ENCODE measurements at regions of chr2 and their contacts with region 1.

Region 1: GRCh38 chr2:97935719-97936161 is 60.0 kb downstream of the TMEM131 start:
- DNase-seq: peak; percentile 44
- H3K4me3 ChIP-seq: peak overlapping the region; percentile 48
- H3K27ac ChIP-seq: peak overlapping the region; percentile 93
- H3K4me1 ChIP-seq: peaks cover 73% of the 10 kb centered on the region
- CTCF ChIP-seq: no peak

Region 2: GRCh38 chr2:97890093-97890492 is 45.6 kb before region 1 on chr2:
- CTCF ChIA-PET with region 1: no interaction called
- POLR2A ChIA-PET with region 1: no interaction called
- intact Hi-C with region 1: no loop called
- DNase-seq: no peak
- H3K4me3 ChIP-seq: no peak overlapping the region
- H3K27ac ChIP-seq: no peak overlapping the region
- H3K4me1 ChIP-seq: no peaks in the 10 kb centered on the region
- CTCF ChIP-seq: no peak

Region 3: DNA sequence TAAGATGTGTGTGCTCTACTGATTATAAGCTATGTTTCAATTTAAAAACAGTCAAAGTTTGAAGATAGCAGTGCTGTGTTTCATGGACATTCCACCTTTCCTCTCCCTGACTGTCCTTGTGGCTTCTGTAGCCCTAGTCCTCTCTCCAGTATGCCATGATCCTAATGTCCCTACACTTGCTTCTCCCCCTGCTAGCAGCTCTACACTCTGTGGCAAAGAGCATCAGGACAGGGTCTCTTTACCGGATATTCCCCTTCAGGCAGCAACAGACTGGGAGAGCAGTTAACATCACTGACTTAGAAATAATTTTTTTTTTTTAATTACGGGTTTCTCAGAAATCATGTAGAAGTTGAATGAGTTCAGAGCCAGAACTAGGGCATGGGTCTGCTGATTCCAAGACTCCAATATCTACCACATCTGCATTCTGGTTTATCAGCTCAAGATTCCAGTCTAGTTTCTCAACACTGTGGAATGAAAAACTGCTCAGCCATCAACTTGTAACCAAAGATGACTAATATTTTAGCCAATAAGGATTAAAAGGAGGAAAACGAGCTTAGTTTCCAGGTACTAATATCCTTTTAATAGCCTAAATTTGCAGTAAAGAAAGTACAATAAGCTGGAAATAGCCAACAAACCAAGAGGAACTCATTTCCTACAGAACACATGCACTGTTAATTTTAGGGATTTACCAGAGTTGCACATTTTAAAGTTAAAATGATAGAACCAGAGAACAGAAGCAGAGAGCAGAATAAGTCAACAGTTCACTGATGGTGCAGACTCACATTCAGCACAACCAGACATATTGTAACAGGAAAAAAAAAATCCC is 14.8 kb after region 1 on chr2:
- CTCF ChIA-PET with region 1: interaction called, 4 read pairs
- POLR2A ChIA-PET with region 1: interaction called, 12 read pairs
- intact Hi-C with region 1: loop called (anchors 2 kb)
- DNase-seq: no peak
- H3K4me3 ChIP-seq: no peak overlapping the region
- H3K27ac ChIP-seq: no peak overlapping the region
- H3K4me1 ChIP-seq: peaks cover 39% of the 10 kb centered on the region
- CTCF ChIP-seq: no peak

Region 4: GRCh38 chr2:97957432-97958186 is 21.9 kb after region 1 on chr2:
- CTCF ChIA-PET with region 1: interaction called, 6 read pairs
- POLR2A ChIA-PET with region 1: interaction called, 14 read pairs
- intact Hi-C with region 1: loop called (anchors 2 kb)
- DNase-seq: peak; percentile 55
- H3K4me3 ChIP-seq: peak overlapping the region; percentile 48
- H3K27ac ChIP-seq: peak overlapping the region; percentile 71
- H3K4me1 ChIP-seq: peaks cover 57% of the 10 kb centered on the region
- CTCF ChIP-seq: no peak

Region 5: DNA sequence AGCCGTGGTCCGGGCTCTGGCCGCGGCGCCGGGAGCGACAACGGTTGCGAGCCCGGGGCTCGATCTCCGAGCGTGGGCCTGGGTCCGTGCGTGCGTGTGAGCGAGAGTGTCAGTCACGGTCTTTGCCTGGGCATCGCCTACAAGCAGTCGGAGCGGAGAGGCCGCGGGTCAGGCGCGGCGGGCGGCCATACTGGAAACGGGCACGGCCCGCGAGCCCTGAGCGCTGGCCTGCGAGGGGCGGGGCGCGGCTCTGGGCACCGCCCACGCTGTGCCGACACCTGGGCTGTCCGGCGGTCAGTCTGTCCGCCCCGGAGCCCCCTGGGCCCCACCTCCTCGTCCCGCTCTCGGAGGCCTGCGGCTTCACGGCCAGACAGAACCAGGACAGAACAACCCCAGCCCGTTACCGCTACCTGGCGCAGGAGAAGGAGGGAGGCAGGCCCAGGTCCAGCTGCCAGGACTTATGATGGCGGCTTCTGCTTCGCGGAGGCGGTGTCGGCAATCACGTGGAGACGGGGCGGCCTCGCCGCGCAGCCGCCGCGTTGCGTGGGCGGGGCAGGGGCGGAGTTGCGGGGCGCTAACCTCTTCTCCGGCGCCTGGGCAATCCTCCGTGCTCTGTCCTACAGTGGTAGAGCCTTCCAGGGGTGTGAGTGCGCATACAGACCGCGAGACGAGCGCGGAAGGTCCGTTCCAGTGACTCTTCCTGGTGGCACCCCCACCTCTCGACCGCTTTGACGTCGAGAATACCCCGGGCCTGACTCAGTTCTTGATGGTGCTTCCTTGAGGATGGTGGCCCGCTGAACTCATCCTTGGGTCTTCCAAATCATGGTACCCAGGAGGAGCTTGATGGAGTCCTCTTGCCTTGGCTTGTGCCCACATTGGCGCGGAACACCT is 60.2 kb after region 1 on chr2 and contains the start of gene TMEM131:
- CTCF ChIA-PET with region 1: no interaction called
- POLR2A ChIA-PET with region 1: interaction called, 4 read pairs
- intact Hi-C with region 1: loop called (anchors 1 kb)
- DNase-seq: peak; percentile 95
- H3K4me3 ChIP-seq: peak within 1 kb of the TSS; percentile 72
- H3K27ac ChIP-seq: peak within 1 kb of the TSS; percentile 80
- H3K4me1 ChIP-seq: peaks cover 42% of the 10 kb centered on the region
- CTCF ChIP-seq: no peak
- total RNA-seq, gene TMEM131: 12.2 and 17.4 TPM in 2 replicates

Region 6: GRCh38 chr2:98012561-98012991 is 76.8 kb after region 1 on chr2:
- CTCF ChIA-PET with region 1: no interaction called
- POLR2A ChIA-PET with region 1: interaction called, 3 read pairs
- intact Hi-C with region 1: loop called (anchors 5 kb)
- DNase-seq: peak; percentile 88
- H3K4me3 ChIP-seq: peak overlapping the region; percentile 61
- H3K27ac ChIP-seq: peak overlapping the region; percentile 89
- H3K4me1 ChIP-seq: peaks cover 82% of the 10 kb centered on the region
- CTCF ChIP-seq: no peak

Region 7: DNA sequence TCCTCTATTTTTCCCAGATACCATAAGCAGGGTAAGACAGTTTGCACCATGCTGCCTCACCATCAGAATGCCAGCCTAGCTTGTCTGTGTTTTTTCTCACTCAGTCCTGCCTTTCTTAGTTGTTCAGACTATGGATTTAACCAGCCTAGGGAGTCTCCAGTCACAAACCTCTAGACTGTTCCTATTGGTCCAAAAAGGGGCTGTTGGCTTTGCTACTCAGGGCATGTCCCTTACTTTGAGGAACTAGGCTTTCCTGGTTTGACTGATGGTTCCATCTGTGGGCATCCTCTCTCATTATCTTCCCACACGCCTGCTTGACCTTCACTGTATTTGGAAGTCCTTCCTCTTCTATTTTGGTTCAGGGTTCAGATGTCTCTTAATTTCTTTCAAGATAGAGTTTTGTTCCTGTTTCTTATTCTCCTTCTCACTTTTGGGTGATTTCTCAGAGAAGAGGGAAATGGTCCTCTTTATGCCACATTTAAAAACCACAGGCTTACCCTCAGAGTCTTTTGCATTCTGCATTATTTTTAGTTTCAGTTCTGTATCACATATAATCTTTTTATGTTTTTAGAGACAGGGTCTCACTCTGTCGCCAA is 91.3 kb after region 1 on chr2:
- CTCF ChIA-PET with region 1: no interaction called
- POLR2A ChIA-PET with region 1: interaction called, 5 read pairs
- intact Hi-C with region 1: loop called (anchors 2 kb)
- DNase-seq: peak; percentile 86
- H3K4me3 ChIP-seq: peak overlapping the region; percentile 58
- H3K27ac ChIP-seq: peak overlapping the region; percentile 90
- H3K4me1 ChIP-seq: peaks cover 63% of the 10 kb centered on the region
- CTCF ChIP-seq: no peak

Region 8: DNA sequence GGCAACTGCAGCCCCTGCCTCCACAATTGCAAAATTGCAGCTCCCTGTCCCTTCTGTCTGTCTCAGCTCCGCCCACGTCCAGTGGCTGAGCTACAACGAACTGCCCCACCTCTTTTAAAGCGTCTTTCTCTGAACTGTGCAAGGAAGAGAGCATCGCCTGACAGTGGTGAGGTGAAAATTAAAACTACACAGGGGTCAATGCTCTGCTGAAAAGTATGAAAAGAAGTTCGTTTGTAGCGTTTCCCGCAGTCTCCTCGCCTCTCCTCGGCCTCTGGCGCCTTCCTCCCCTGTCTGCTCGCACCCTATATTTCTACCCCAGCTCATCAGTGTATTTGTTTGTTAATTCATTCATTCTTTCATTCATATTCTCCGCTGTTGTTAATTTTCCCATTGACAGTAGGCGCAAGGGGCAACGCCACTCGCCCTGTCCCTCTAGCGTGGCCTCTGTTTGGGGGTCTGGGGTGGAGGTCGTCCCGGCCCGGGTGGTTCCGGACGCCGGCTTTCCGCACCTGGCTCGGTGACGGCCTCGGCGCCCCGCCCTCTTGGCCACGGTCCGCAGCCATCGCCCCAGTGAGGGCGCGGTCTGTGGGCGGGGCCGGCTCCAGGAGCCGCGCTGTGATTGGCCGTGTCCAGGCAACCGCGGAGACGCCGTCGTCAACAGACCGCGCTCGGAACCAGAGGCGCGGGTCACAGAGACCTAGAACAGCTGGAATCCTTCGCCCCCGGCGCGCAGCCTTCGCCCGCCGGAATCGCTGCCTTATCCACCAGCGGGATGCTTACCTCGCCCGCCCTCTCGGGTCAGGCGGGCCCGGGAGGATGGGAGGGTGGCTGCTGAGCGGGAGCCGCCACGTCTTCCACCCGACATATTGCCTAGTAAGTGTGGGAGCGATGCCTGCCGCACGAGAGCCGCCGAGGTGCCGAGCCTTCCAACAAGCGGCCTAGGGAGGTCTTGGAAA is 151.0 kb after region 1 on chr2 and contains the start of gene VWA3B:
- CTCF ChIA-PET with region 1: no interaction called
- POLR2A ChIA-PET with region 1: no interaction called
- intact Hi-C with region 1: loop called (anchors 10 kb)
- DNase-seq: peak; percentile 70
- H3K4me3 ChIP-seq: peak within 1 kb of the TSS; percentile 73
- H3K27ac ChIP-seq: no peak within 1 kb of the TSS
- H3K4me1 ChIP-seq: peaks cover 45% of the 10 kb centered on the region
- CTCF ChIP-seq: no peak
- total RNA-seq, gene VWA3B: not detected in 2 replicates